GM23248 (cell line): ENCODE measurements at regions of chr5 and their contacts with region 1.

Region 1: DNA sequence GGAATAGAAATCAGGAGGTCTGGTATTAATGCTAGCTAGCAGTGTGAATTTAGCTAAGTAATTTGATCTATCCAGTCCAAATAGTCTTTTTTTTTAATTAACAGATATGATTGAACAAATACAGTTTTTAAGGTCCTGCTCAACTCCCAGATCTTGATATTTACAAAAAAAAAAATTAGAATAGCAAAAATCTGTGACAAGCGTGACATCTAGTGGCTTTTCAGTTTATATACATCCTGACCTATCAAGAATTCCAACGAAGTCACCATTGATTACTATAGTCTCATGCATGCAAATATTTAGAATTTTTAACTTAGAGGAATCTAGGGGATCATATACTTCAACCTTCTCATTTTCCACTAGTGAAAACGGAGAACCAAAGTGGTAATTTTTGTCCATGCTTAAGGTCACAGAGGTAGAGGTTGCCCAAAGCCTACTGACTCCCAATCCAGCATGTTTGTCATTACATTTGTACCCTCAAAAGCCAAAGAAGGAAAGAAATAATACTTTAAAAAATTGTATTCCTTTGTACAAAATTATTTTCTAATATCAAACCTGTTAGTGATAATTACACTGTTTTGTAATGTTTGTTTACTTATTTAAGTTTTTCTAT is 17.6 kb upstream of the TARS1 start:
- DNase-seq: peak; percentile 60
- H3K4me3 ChIP-seq: no peak overlapping the region
- H3K27ac ChIP-seq: no peak overlapping the region
- H3K4me1 ChIP-seq: peaks cover 28% of the 10 kb centered on the region
- H3K27me3 ChIP-seq: no peaks in the 10 kb centered on the region

Region 2: GRCh38 chr5:32709781-32710549 is 713.2 kb before region 1 on chr5:
- in situ Hi-C with region 1: loop called (anchors 10 kb)
- DNase-seq: peak; percentile 91
- H3K4me3 ChIP-seq: peak overlapping the region; percentile 90
- H3K27ac ChIP-seq: peak overlapping the region; percentile 86
- H3K4me1 ChIP-seq: peaks cover 10% of the 10 kb centered on the region
- H3K27me3 ChIP-seq: no peaks in the 10 kb centered on the region

Region 3: GRCh38 chr5:32785611-32786216 is 637.4 kb before region 1 on chr5:
- in situ Hi-C with region 1: no loop called
- DNase-seq: no peak
- H3K4me3 ChIP-seq: no peak overlapping the region
- H3K27ac ChIP-seq: no peak overlapping the region
- H3K4me1 ChIP-seq: peaks cover 11% of the 10 kb centered on the region
- H3K27me3 ChIP-seq: no peaks in the 10 kb centered on the region

Region 4: DNA sequence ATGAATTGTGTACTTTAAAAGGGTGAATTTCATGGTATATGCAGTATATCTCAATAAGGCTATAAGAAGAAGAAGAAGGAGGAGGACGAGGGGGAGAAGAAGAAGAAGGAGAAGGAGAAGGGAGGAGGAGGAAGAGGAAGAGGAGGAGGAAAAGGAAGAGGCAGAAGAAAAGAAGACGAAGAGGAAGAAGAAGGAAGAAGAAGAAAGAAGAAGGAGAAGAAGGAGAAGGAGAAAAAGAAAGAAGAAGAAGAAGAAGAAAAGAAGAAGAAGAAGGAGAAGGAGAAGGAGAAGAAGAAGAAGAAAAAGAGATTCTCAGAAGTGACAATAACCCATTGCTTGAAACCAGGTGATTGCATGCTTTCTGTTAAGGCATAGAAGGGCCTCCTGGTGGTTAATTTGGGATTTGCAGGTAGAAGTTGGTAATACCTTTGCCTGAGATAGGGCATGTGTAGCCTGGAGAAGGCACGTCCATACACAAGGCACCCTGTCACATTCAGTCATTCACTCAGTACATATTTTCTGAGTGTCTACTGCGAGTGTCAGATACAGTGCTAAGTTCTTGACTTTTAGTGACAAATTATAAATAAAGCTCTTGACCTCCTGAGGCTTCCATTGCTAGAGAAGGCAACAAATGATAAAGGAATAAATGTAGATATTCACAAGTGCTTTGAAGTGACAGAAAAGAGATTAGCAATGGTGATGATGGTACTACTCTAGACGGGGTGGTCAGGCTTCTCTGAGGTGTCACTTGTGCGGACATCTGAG is 480.7 kb before region 1 on chr5:
- in situ Hi-C with region 1: loop called (anchors 25 kb)
- DNase-seq: no peak
- H3K4me3 ChIP-seq: no peak overlapping the region
- H3K27ac ChIP-seq: no peak overlapping the region
- H3K4me1 ChIP-seq: no peaks in the 10 kb centered on the region
- H3K27me3 ChIP-seq: no peaks in the 10 kb centered on the region

Region 5: GRCh38 chr5:33180900-33181299 is 242.2 kb before region 1 on chr5:
- in situ Hi-C with region 1: loop called (anchors 25 kb)
- DNase-seq: peak; percentile 69
- H3K4me3 ChIP-seq: no peak overlapping the region
- H3K27ac ChIP-seq: no peak overlapping the region
- H3K4me1 ChIP-seq: peaks cover 9% of the 10 kb centered on the region; the same call in 1 of the 2 replicates
- H3K27me3 ChIP-seq: no peaks in the 10 kb centered on the region